PC-9 (cell line): ENCODE measurements at regions of chr17 and their contacts with region 1.

Region 1: DNA sequence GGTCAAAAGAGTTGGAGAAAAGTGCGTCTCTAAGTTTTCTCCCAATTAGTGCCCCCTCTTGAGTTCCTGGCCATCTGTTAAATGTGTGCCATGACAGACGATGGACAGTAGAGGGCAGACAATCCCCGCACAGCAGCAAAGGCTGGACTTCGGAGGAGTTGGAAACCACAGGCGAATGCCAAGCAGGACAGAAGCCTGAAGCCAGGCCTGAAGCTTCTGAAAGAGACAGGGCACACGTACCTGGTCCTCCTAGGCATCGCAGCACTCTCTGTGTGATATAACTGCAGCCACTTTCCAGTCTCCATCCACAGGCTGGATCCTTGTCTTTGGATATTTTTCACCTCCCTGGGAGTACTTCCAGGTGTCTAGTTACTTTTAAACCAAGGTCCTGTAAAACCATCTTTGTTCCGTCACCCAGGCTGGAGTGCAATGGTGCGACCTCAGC is 14.5 kb downstream of the C17orf100 start:
- DNase-seq: peak; percentile 67 to 84
- H3K4me3 ChIP-seq: no peak overlapping the region
- H3K27ac ChIP-seq: no peak overlapping the region
- H3K4me1 ChIP-seq: peaks cover 37% of the 10 kb centered on the region
- H3K27me3 ChIP-seq: no peaks in the 10 kb centered on the region
- CTCF ChIP-seq: peak; percentile 96

Region 2: GRCh38 chr17:6713130-6713917 is 47.2 kb after region 1 on chr17 and contains the start of gene SLC13A5:
- CTCF ChIA-PET with region 1: no interaction called
- POLR2A ChIA-PET with region 1: interaction called, 5 read pairs
- intact Hi-C with region 1: loop called (anchors 5 kb)
- DNase-seq: peak in 1 of 2 experiments; percentile 43
- H3K4me3 ChIP-seq: no peak within 1 kb of the TSS
- H3K27ac ChIP-seq: no peak within 1 kb of the TSS
- H3K4me1 ChIP-seq: no peaks in the 10 kb centered on the region
- H3K27me3 ChIP-seq: no peaks in the 10 kb centered on the region
- CTCF ChIP-seq: no peak
- total RNA-seq, gene SLC13A5: 0.92 and 2.0 TPM in 2 replicates

Region 3: GRCh38 chr17:6753006-6753445 is 86.9 kb after region 1 on chr17:
- CTCF ChIA-PET with region 1: interaction called, 5 read pairs
- POLR2A ChIA-PET with region 1: no interaction called
- intact Hi-C with region 1: loop called (anchors 2 kb)
- DNase-seq: peak in 1 of 2 experiments; percentile 60
- H3K4me3 ChIP-seq: peak overlapping the region; percentile 10; the same call in 1 of the 2 replicates
- H3K27ac ChIP-seq: peak overlapping the region; percentile 94
- H3K4me1 ChIP-seq: peaks cover 22% of the 10 kb centered on the region
- H3K27me3 ChIP-seq: no peaks in the 10 kb centered on the region
- CTCF ChIP-seq: no peak

Region 4: GRCh38 chr17:6843241-6843880 is 177.3 kb after region 1 on chr17:
- CTCF ChIA-PET with region 1: interaction called, 7 read pairs
- POLR2A ChIA-PET with region 1: no interaction called
- intact Hi-C with region 1: loop called (anchors 1 kb)
- DNase-seq: peak in 1 of 2 experiments; percentile 49
- H3K4me3 ChIP-seq: no peak overlapping the region
- H3K27ac ChIP-seq: no peak overlapping the region
- H3K4me1 ChIP-seq: no peaks in the 10 kb centered on the region
- H3K27me3 ChIP-seq: no peaks in the 10 kb centered on the region
- CTCF ChIP-seq: peak; percentile 78

Region 5: GRCh38 chr17:7136266-7136877 is 470.3 kb after region 1 on chr17:
- CTCF ChIA-PET with region 1: interaction called, 18 read pairs
- POLR2A ChIA-PET with region 1: no interaction called
- intact Hi-C with region 1: loop called (anchors 1 kb)
- DNase-seq: peak; percentile 42 to 70
- H3K4me3 ChIP-seq: peak overlapping the region; percentile 50
- H3K27ac ChIP-seq: no peak overlapping the region
- H3K4me1 ChIP-seq: peaks cover 16% of the 10 kb centered on the region
- H3K27me3 ChIP-seq: no peaks in the 10 kb centered on the region
- CTCF ChIP-seq: peak; percentile 98